ENCODE measurements at regions of chr9 and their contacts with region 1.

Region 1: GRCh38 chr9:94139672-94140417 is 55.6 kb downstream of the PTPDC1 start:
- DNase-seq: peak; percentile 72
- ATAC-seq: peak; percentile 85
- H3K4me3 ChIP-seq: peak overlapping the region; percentile 6 to 22; a peak in 3 of 4 replicates
- H3K27ac ChIP-seq: peak overlapping the region; percentile 57
- H3K4me1 ChIP-seq: peaks cover 19 to 25% of the 10 kb centered on the region in 2 experiments
- H3K27me3 ChIP-seq: no peaks in the 10 kb centered on the region
- CTCF ChIP-seq: no peak
- POLR2A ChIP-seq: no peak
- RAD21 ChIP-seq: no peak

Region 2: DNA sequence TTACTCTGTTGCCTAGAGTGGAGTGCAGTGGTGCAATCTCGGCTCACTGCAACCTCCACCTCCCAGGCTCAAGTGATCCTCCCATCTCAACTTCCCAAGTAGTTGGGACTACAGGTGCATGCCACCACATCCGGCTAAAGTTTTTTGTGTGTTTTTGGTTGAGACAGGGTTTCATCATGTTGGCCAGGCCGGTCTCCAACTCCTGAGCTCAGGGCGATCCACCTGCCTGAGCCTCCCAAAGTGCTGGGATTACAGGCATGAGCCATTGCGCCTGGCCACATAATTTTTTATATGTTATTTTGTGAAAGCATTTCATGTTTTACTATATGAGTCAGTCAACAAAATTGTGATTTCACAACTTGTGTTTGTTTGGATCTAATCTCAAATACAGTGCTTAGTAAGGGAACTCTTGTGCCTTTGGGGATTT is 666.5 kb before region 1 on chr9:
- CTCF ChIA-PET with region 1: no interaction called
- POLR2A ChIA-PET with region 1: no interaction called
- RAD21 ChIA-PET with region 1: no interaction called
- intact Hi-C with region 1: no loop called
- DNase-seq: no peak
- ATAC-seq: no peak
- H3K4me3 ChIP-seq: no peak overlapping the region
- H3K27ac ChIP-seq: no peak overlapping the region
- H3K4me1 ChIP-seq: no peaks in the 10 kb centered on the region; a peak in 1 of 4 replicates
- H3K27me3 ChIP-seq: no peaks in the 10 kb centered on the region
- CTCF ChIP-seq: no peak
- POLR2A ChIP-seq: no peak
- RAD21 ChIP-seq: no peak

Region 3: DNA sequence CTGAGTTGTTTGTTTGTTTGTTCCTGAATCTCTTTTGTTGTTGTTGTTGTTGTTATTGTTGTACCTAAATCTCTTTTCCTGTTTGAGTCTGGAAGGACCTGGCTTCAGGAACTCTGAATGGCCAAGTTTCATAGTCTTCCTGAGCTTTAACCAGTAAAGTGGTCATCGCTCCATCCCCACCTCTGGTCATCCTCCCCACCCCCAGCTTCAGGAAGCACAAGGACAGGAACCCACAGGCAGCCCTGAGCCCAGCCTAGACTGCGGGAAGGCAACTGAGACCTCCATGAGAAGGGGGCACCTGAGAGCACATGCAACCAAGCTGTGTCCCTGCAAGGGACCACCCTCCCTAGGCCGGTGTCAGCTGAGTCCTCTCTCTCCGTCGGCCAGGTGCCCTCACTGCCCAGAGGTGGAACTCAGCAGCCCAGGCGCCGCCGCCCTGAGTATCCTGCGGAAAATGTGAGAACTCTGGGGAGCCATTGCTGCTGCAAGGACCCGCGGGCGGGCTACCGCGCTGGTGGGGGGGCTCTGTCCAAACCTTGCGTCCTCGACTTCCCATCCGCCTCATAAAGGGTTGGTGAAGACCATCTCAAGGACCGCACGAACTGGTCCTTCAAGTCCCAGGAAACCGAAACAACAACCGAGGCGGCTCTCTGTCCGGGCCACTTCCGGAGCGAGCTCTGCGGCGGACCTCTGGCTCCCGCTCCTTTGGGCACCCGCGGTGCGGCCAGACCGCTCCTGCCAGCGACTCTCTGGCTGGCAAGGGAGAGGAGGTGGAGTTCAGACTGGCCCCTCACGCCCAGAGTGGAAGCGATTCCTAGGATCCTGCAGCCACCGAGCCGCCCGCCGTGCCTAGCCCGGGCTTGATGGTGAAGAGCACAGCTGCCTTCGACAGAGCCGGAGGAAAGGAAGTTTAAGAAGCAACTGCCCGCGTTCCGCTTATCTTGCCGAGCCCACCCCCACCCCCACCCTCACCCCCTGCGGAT is 188.9 kb before region 1 on chr9:
- CTCF ChIA-PET with region 1: no interaction called
- POLR2A ChIA-PET with region 1: no interaction called
- RAD21 ChIA-PET with region 1: no interaction called
- intact Hi-C with region 1: no loop called
- DNase-seq: no peak
- ATAC-seq: no peak
- H3K4me3 ChIP-seq: no peak overlapping the region
- H3K27ac ChIP-seq: no peak overlapping the region
- H3K4me1 ChIP-seq: peaks cover 0 to 11% of the 10 kb centered on the region in 2 experiments; a peak in 3 of 4 replicates
- H3K27me3 ChIP-seq: no peaks in the 10 kb centered on the region
- CTCF ChIP-seq: no peak
- POLR2A ChIP-seq: no peak
- RAD21 ChIP-seq: no peak

Region 4: DNA sequence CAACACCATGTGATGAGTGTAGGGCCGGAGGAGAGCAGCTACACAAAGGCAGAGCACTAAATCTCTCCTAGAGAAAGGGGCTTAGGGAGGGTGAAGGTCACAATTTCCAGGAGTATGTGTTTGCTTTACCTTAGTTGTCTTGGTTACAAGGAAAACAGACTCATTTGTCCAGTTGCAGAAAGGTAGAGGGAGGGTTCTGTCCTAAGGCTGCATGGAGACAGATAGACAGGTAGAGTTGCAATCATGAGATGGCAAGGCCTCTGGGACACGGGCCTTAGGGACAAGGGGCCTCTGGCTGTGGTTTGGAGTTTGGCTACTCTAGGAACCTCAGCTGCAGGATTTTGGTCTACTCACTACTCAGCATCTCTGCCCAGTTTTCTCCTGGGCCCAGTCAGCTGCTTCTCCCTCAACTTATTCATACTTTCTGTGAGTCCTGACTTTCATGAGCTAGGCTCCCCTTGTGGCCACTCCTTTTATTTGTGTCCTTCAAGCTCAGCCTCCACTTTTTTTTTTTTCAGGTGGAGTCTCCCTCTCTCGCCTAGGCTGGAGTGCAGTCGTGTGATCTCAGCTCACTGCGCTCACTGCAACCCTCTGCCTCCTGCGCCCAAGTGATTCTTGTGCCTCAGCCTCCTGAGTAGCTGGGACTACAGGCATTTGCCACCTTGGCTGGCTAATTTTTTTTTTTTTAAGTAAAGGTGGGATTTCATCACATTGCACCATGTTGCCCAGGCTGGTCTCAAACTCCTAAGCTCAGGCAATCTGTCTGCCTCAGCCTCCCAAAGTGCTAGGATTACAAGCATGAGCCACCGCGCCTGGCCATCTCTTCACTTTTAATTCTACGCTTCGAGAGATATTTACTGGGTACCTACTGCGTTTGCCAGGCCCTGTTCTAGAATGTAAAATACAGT is 21.0 kb after region 1 on chr9:
- CTCF ChIA-PET with region 1: interaction called, 4 read pairs
- POLR2A ChIA-PET with region 1: interaction called, 5 read pairs
- RAD21 ChIA-PET with region 1: no interaction called
- intact Hi-C with region 1: loop called (anchors 1 kb)
- DNase-seq: peak; percentile 44
- ATAC-seq: peak; percentile 35; the same call in 1 of the 2 replicates
- H3K4me3 ChIP-seq: no peak overlapping the region
- H3K27ac ChIP-seq: no peak overlapping the region
- H3K4me1 ChIP-seq: peaks cover 9 to 24% of the 10 kb centered on the region in 2 experiments
- H3K27me3 ChIP-seq: no peaks in the 10 kb centered on the region
- CTCF ChIP-seq: peak in 2 of 3 experiments; percentile 20 to 44; a peak in 4 of 6 replicates
- POLR2A ChIP-seq: no peak
- RAD21 ChIP-seq: peak; percentile 39; the same call in 1 of the 2 replicates